HepG2 (cell line): ENCODE measurements at regions of chr20 and their contacts with region 1.

Region 1: GRCh38 chr20:41411391-41411847 is 44.8 kb upstream of the EMILIN3 start:
- DNase-seq: no peak
- ATAC-seq: no peak
- H3K4me3 ChIP-seq: no peak overlapping the region
- H3K27ac ChIP-seq: no peak overlapping the region
- H3K4me1 ChIP-seq: no peaks in the 10 kb centered on the region
- H3K27me3 ChIP-seq: no peaks in the 10 kb centered on the region
- CTCF ChIP-seq: peak; percentile 42
- EP300 ChIP-seq: no peak
- POLR2A ChIP-seq: no peak
- RAD21 ChIP-seq: peak; percentile 17; the same call in 1 of the 2 replicates

Region 2: GRCh38 chr20:41173161-41173721 is 238.2 kb before region 1 on chr20:
- CTCF ChIA-PET with region 1: no interaction called
- POLR2A ChIA-PET with region 1: no interaction called
- in situ Hi-C with region 1: no loop called
- intact Hi-C with region 1: loop called (anchors 1 kb)
- DNase-seq: peak; percentile 62
- ATAC-seq: peak; percentile 89
- H3K4me3 ChIP-seq: no peak overlapping the region
- H3K27ac ChIP-seq: no peak overlapping the region
- H3K4me1 ChIP-seq: no peaks in the 10 kb centered on the region
- H3K27me3 ChIP-seq: no peaks in the 10 kb centered on the region
- CTCF ChIP-seq: peak; percentile 98
- EP300 ChIP-seq: no peak
- POLR2A ChIP-seq: no peak
- RAD21 ChIP-seq: peak; percentile 98

Region 3: DNA sequence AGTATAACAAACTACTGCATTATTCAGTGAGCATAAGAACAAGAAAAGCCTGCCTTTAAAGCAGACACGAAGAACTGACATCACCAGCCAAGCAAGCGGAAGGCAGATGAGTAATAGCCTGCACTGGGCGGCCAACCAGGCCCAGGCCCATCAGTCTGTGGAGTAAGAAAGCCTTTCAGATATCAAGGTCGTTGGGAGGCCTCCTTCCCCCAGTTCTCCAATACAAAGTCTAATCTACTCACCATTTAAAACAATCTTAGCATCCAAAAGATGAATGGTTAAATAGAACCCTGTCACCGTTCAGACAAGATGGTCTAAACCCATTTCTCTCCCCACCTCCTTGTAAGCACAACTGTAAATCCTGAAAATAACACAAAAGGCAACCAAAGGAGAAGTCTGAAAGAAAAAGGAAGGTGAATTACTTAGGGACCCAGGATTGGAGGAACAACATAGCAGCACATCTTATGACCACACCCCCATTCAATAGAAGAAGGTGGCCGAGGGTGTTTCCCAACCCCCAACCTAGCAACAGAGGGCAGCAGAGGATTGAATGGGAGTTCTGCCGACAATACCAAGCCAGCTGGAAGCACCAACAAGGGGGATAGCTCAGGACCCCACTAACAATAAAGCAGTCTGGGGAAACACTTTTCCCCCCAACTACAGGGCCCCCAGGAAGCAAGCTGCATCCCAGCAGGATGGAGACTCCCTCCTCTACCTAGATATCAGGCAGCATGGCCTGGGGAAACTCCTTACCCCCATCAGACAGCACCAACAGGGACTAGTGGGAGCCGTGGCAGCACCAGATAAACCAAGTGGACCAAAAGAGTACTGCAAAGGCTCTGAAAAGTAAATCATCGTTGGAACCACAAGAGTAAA is 161.8 kb before region 1 on chr20:
- CTCF ChIA-PET with region 1: interaction called, 3 read pairs
- POLR2A ChIA-PET with region 1: no interaction called
- in situ Hi-C with region 1: no loop called
- intact Hi-C with region 1: loop called (anchors 5 kb)
- DNase-seq: peak; percentile 55
- ATAC-seq: peak; percentile 96
- H3K4me3 ChIP-seq: no peak overlapping the region
- H3K27ac ChIP-seq: no peak overlapping the region
- H3K4me1 ChIP-seq: no peaks in the 10 kb centered on the region
- H3K27me3 ChIP-seq: no peaks in the 10 kb centered on the region
- CTCF ChIP-seq: peak; percentile 83
- EP300 ChIP-seq: no peak
- POLR2A ChIP-seq: no peak
- RAD21 ChIP-seq: peak; percentile 73

Region 4: GRCh38 chr20:41432746-41433145 is 21.3 kb after region 1 on chr20:
- CTCF ChIA-PET with region 1: no interaction called
- POLR2A ChIA-PET with region 1: no interaction called
- in situ Hi-C with region 1: no loop called
- intact Hi-C with region 1: loop called (anchors 1 kb)
- DNase-seq: no peak
- ATAC-seq: no peak
- H3K4me3 ChIP-seq: no peak overlapping the region
- H3K27ac ChIP-seq: no peak overlapping the region
- H3K4me1 ChIP-seq: peaks cover 14% of the 10 kb centered on the region
- H3K27me3 ChIP-seq: no peaks in the 10 kb centered on the region
- CTCF ChIP-seq: no peak
- EP300 ChIP-seq: no peak
- POLR2A ChIP-seq: no peak
- RAD21 ChIP-seq: no peak